ENCODE measurements at regions of chrX and their contacts with region 1.

Region 1: GRCh38 chrX:153667956-153668396 is 5.6 kb downstream of the PNCK start:
- H3K4me3 Mint-ChIP-seq: peak overlapping the region; percentile 67
- H3K27ac Mint-ChIP-seq: peak overlapping the region; percentile 55
- H3K4me1 Mint-ChIP-seq: peaks cover 9% of the 10 kb centered on the region
- H3K27me3 Mint-ChIP-seq: peaks cover 60% of the 10 kb centered on the region

Region 2: DNA sequence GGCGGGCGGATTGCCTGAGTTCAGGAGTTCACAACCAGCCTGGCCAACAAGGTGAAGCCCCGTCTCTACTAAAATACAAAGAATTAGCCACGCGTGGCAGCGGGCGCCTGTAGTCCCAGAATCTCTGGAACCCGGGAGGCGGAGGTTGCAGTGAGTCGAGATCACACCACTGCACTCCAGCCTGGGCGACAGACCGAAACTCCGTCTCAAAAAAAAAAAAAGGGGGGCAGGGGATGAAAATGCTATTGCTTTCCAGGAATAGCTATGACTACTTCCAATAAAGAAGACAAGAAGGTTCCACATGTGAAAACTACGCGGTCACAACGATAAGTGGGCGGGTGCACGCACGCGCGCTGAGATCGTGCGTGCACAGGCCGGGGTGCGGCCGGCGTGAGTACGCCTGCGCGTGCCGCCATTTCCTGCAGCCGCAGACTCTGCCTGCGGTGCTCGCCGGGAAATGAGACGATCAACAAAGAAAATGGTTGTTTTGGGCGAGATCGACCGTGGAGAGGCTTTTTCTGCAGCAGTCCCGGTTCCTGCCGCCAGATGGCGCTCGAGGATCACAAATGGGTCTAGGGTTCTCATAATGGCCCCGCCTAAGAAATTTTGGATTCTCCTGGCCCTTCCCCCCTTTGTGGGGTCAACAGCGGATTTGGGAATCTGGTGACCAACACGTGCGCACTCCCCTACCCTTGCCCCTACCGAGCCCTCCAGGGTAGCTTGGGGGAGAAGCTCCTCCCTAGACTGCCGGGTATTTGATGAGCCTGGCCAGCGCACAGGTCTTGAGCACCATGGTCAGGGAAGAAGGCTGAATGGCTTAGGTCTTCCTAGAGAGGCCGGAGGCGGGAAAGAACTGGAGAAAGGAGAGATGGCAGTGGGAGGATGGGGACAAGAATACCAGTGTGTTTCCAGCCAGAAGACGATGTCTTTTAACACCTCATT is 709.2 kb before region 1 on chrX:
- intact Hi-C with region 1: loop called (anchors 10 kb)
- H3K4me3 Mint-ChIP-seq: peak overlapping the region; percentile 58
- H3K27ac Mint-ChIP-seq: peak overlapping the region; percentile 87
- H3K4me1 Mint-ChIP-seq: peaks cover 11% of the 10 kb centered on the region
- H3K27me3 Mint-ChIP-seq: no peaks in the 10 kb centered on the region

Region 3: DNA sequence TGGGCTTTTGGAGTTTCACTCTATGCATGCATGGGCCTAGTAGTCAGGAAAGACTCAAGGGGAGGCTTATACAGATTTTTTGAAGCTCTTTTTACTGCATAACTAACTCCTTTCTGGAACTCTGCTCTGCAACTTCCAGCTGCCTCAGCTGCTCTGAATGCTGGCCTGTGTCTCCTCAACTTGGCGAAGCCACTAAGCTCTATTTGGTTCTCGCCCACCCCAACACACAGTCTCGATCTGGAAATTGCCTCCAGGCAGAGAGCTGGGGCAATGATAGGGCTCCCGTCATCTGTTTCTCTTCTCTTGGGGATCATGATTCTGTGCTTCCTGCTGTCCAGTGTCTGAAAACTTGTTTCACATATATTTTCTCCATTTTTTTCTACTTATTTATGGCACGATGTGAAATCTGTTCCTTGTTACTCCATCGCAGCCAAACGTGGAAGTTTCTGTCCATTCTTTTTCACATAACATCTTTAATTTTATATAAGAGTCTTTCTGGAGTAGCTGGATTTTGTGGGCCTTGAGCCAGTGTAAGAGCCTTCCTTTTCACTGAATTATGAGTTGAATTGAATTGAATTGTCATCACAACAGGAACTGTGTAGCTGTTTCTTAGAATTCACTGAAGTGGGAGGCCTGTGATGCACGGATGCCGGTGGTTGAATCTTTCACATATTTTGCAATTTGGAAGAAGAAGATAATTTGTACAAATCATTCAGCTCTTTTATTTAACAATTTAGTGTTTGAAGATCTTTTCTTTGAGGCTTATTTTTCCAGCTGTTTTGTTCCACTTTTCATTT is 325.0 kb before region 1 on chrX:
- intact Hi-C with region 1: no loop called
- H3K4me3 Mint-ChIP-seq: no peak overlapping the region
- H3K27ac Mint-ChIP-seq: no peak overlapping the region
- H3K4me1 Mint-ChIP-seq: peaks cover 13% of the 10 kb centered on the region
- H3K27me3 Mint-ChIP-seq: no peaks in the 10 kb centered on the region

Region 4: DNA sequence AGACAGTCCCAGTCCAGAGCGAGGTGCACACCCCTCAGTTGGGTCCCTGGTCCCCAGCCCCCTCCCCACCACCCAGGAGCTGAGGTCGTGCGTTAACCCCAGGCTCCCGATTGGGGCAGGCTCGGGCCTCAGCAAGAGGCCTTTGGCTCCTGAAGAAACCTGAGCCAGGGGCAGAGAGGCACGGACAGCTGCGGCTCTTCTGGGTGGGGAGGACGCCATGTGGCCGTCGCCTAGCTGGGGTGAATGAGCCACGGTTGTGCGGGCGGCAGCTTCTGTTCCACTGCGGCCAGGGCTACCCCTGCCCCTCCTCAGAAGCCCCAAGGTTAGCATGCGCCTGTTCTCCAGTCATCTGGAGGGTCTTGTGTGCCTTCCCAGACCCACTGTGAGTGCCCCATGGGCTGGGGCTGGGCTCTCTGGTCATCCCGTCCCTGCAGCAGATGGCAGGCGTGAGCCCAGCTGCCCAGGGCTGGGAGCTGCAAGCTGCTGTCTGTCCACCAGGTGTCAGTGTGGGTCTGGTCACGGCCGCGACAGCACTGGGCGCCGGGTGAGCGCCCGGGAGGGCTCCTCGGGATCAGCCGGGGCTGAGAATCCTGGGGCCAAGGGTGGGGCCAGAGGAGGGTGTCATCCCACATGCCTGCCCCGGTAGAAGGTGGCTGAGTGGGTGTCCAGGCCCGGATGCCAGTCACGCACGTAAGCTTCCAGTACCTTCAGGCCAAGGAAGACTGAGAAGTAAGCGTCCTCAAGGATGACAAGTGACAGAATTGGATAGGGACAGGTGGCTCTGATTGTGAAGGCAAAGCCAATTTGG is 128.6 kb before region 1 on chrX:
- intact Hi-C with region 1: loop called (anchors 5 kb)
- H3K4me3 Mint-ChIP-seq: no peak overlapping the region
- H3K27ac Mint-ChIP-seq: no peak overlapping the region
- H3K4me1 Mint-ChIP-seq: no peaks in the 10 kb centered on the region
- H3K27me3 Mint-ChIP-seq: peaks cover 17% of the 10 kb centered on the region

Region 5: DNA sequence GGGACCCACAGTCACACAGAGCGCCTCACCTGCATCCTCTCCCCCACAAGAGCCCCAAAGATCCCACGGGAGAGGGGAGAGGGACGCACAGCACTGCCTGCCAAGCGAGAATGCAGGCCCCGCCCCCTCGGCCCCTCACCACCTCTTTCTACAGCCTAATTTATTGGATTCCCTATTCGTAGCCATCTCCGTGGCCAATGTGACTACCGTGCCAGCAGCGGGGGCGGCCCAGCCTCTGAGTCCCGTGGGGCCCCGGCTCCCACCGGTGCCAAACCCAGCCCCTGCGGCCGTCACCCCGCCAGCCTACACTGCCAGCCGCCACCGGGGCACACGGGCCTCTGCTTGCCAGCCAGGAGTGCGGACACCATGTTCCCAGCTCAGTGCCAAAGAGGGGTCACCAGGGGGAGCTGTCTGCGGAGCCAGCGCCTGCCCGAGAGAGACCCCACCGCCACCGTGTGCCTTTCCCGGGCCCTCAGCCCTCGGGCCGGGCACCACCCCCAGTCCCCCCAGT is 76.3 kb after region 1 on chrX:
- intact Hi-C with region 1: no loop called
- H3K4me3 Mint-ChIP-seq: no peak overlapping the region
- H3K27ac Mint-ChIP-seq: no peak overlapping the region
- H3K4me1 Mint-ChIP-seq: peaks cover 16% of the 10 kb centered on the region
- H3K27me3 Mint-ChIP-seq: peaks cover 25% of the 10 kb centered on the region

Region 6: DNA sequence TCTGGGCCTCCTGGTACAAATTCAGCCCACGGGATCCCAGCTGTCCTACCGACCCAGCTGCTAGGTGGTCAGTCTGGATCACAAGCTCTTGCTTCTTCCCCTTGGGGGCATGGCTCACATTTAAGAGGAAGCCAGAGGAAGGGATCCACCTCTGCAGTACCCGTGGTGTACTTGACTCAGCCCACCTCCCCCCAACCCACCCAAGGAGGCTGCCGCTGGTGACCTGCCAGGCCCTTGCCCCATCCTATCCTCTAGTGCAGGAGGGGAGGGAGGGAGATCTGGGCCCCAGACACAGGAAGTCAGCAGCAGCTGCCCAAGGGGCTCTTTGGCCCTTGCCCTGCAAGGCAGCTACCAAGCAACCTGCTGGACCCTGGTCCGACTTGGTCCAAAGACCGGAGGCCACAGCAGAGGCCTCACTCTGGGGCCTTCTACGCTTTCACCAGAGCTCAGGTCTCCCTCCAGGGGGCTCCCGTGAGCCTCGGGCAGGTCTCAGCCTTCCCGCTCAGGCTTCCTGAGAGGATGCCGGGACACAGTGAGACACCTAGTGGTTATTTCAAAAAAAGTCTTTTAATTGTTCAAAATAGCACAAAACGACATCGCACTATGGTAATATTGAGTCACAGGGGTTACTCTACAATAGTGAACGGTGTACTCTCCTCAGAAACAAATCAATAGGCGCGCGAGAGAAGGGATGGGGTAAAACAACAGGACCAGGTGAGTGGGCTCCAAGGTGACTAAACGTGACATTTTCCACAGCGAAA is 279.2 kb after region 1 on chrX:
- intact Hi-C with region 1: no loop called
- H3K4me3 Mint-ChIP-seq: no peak overlapping the region
- H3K27ac Mint-ChIP-seq: peak overlapping the region; percentile 47
- H3K4me1 Mint-ChIP-seq: peaks cover 56% of the 10 kb centered on the region
- H3K27me3 Mint-ChIP-seq: no peaks in the 10 kb centered on the region